Ovary (tissue), 10 donors: ENCODE measurements at regions of chr6 and their contacts with region 1.

Region 1: DNA sequence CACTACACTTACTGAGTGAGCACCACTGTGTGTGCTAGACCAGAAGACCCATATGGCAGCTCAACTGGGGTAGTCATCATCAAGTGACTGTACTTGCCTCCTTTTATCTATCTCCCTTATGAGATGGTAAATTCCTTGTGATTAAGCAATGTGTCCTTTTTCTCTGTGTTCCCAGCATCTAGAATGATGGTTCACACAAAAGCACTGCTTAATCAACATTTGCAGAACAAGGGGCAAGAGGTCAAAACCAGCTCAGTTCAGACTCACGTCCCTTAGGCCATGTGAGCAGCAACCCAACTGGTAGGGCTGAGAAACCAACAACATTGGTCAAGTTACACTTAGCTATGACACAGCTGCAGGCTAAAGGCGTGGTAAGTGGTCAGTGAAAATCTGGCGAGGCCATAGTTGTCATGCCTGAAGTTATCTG is 10.0 kb downstream of the TRAM2 start:
- DNase-seq: no peak
- H3K4me3 ChIP-seq: no peak overlapping the region
- H3K27ac ChIP-seq: no peak overlapping the region
- H3K4me1 ChIP-seq: peaks cover 23% of the 10 kb centered on the region
- H3K27me3 ChIP-seq: no peaks in the 10 kb centered on the region
- CTCF ChIP-seq: no peak
- EP300 ChIP-seq: no peak
- POLR2A ChIP-seq: no peak

Region 2: DNA sequence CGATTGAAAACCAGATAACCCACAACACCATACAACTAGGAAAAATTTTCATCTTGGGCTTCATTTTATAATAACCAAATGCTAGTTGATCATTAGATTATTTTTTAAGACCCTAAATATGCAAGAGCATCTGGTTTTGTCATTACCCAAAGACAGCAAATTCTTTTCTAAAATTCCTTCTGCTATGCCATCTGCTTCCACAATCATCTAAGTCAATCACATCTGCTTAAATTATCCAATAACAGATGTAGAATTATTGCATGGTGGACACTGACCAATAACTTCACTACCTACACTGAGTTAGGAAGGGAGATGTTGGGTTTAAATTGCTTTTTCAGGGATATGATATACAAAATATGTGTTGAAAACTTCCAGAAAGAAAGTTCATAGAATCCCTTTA is 521.4 kb before region 1 on chr6:
- intact Hi-C with region 1: no loop called
- DNase-seq: no peak
- H3K4me3 ChIP-seq: no peak overlapping the region
- H3K27ac ChIP-seq: no peak overlapping the region
- H3K4me1 ChIP-seq: no peaks in the 10 kb centered on the region
- H3K27me3 ChIP-seq: no peaks in the 10 kb centered on the region
- CTCF ChIP-seq: no peak
- EP300 ChIP-seq: no peak
- POLR2A ChIP-seq: no peak

Region 3: GRCh38 chr6:52529311-52529710 is 37.6 kb before region 1 on chr6:
- intact Hi-C with region 1: loop called in 1 of 4 experiments (anchors 5 kb)
- DNase-seq: no peak
- H3K4me3 ChIP-seq: no peak overlapping the region
- H3K27ac ChIP-seq: no peak overlapping the region
- H3K4me1 ChIP-seq: peaks cover 5% of the 10 kb centered on the region
- H3K27me3 ChIP-seq: no peaks in the 10 kb centered on the region
- CTCF ChIP-seq: no peak
- EP300 ChIP-seq: no peak
- POLR2A ChIP-seq: no peak

Region 4: GRCh38 chr6:52788478-52788877 is 221.6 kb after region 1 on chr6:
- intact Hi-C with region 1: no loop called
- DNase-seq: no peak
- H3K4me3 ChIP-seq: no peak overlapping the region
- H3K27ac ChIP-seq: no peak overlapping the region
- H3K4me1 ChIP-seq: no peaks in the 10 kb centered on the region
- H3K27me3 ChIP-seq: no peaks in the 10 kb centered on the region
- CTCF ChIP-seq: no peak
- EP300 ChIP-seq: no peak
- POLR2A ChIP-seq: no peak